ENCODE measurements at regions of chr1 and their contacts with region 1.

Region 1: GRCh38 chr1:13960375-13960987 is 260.5 kb downstream of the PRDM2 start:
- DNase-seq: peak; percentile 84
- H3K4me3 ChIP-seq: no peak overlapping the region
- H3K27ac ChIP-seq: no peak overlapping the region
- H3K4me1 ChIP-seq: no peaks in the 10 kb centered on the region
- H3K27me3 ChIP-seq: no peaks in the 10 kb centered on the region
- CTCF ChIP-seq: peak; percentile 91

Region 2: DNA sequence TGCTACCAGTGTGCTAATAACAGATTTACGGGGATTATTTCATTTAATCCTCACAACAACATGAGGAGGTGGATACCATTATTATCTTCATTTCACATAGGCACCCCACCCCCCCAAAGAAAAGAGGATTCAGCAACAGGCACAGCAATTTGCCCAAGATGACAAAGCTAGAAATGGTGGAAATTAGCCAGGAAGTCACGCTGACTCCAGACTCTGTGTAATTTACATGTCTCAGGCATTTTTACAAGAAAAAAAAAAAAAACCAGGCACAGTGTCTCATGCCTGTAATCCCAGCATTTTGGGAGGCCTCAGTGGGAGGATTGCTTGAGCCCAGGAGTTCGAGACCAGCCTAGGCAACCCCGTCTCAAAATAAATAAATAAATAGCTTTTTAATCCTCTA is 298.0 kb before region 1 on chr1:
- intact Hi-C with region 1: loop called (anchors 2 kb)
- DNase-seq: no peak
- H3K4me3 ChIP-seq: no peak overlapping the region
- H3K27ac ChIP-seq: no peak overlapping the region
- H3K4me1 ChIP-seq: no peaks in the 10 kb centered on the region
- H3K27me3 ChIP-seq: no peaks in the 10 kb centered on the region
- CTCF ChIP-seq: no peak

Region 3: GRCh38 chr1:13707164-13707563 is 253.3 kb before region 1 on chr1:
- intact Hi-C with region 1: no loop called
- DNase-seq: no peak
- H3K4me3 ChIP-seq: no peak overlapping the region
- H3K27ac ChIP-seq: no peak overlapping the region
- H3K4me1 ChIP-seq: peaks cover 4% of the 10 kb centered on the region
- H3K27me3 ChIP-seq: no peaks in the 10 kb centered on the region
- CTCF ChIP-seq: no peak

Region 4: GRCh38 chr1:13828454-13829151 is 131.9 kb before region 1 on chr1:
- intact Hi-C with region 1: loop called (anchors 2 kb)
- DNase-seq: peak; percentile 88
- H3K4me3 ChIP-seq: peak overlapping the region; percentile 5
- H3K27ac ChIP-seq: peak overlapping the region; percentile 33
- H3K4me1 ChIP-seq: peaks cover 4% of the 10 kb centered on the region
- H3K27me3 ChIP-seq: no peaks in the 10 kb centered on the region
- CTCF ChIP-seq: peak; percentile 82

Region 5: DNA sequence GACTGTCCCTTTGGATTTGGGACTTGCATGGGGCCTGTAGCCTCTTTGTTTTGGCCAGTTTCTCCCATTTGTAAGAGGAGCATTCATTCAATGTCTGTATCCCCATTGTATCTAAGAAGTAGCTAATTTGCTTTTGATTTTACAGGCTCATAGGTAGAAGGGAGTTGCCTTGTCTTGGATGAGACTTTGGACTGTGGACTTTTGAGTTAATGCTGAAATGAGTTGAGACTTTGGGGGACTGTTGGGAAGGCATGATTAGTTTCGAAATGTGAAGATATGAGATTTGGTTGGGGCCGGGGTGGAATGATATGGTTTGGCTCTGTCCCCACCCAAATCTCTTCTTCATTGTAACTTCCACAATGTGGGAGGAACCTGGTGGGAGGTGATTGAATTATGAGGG is 108.8 kb before region 1 on chr1:
- intact Hi-C with region 1: no loop called
- DNase-seq: no peak
- H3K4me3 ChIP-seq: no peak overlapping the region
- H3K27ac ChIP-seq: no peak overlapping the region
- H3K4me1 ChIP-seq: no peaks in the 10 kb centered on the region
- H3K27me3 ChIP-seq: no peaks in the 10 kb centered on the region
- CTCF ChIP-seq: no peak

Region 6: GRCh38 chr1:13864760-13865159 is 95.7 kb before region 1 on chr1:
- intact Hi-C with region 1: no loop called
- DNase-seq: no peak
- H3K4me3 ChIP-seq: no peak overlapping the region
- H3K27ac ChIP-seq: no peak overlapping the region
- H3K4me1 ChIP-seq: no peaks in the 10 kb centered on the region
- H3K27me3 ChIP-seq: no peaks in the 10 kb centered on the region
- CTCF ChIP-seq: no peak

Region 7: DNA sequence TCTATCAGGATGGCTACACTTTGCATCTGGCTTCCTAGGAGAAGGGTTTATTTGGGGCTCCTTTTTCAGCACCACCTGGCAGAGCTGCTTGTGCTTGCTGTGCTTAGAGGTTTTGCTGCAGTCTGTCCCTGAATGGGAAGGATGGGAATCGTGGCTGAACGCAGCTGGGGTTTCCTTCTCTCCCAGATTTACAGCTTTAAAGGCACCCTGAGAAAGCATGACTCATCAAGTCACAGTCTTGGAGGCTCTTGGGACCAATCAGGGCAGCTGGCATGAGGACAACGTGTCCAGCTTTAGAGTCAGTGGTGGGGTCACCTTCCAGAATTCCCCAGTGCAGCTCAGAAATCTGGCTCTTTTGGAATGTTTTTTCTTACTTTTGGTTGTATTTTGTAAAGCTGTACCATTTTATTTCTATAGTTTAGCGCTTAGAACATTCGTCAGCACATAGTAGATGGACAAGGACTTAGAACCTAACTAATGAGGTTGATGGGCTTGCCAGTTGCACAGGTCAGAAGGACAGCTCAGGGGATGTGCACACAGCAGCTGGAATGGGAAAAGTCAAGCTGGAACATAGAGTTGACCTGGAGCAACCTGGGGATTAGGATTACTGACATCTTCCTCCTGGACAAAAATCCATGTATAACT is 37.9 kb before region 1 on chr1:
- intact Hi-C with region 1: no loop called
- DNase-seq: no peak
- H3K4me3 ChIP-seq: no peak overlapping the region
- H3K27ac ChIP-seq: no peak overlapping the region
- H3K4me1 ChIP-seq: no peaks in the 10 kb centered on the region
- H3K27me3 ChIP-seq: no peaks in the 10 kb centered on the region
- CTCF ChIP-seq: no peak

Region 8: DNA sequence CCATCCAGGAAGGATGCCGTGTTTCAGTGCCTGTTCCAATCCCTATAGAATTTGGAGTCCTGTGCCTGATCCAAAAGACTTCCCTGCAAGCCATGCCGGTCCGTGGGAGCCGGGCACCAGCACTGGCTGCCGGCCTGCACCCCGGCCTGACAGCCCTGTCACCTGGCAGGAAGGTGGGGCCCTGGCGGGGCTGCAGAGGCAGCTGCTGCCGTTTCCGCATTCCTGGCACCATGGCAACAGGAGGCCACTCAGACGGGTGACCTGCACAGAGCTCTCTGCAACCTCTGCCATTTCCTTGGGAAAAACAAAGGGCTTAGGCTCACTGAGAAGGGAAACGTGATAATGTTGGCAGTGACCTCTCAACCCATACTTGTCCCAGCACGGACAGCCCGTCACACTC is 1129.9 kb after region 1 on chr1:
- intact Hi-C with region 1: loop called (anchors 10 kb)
- DNase-seq: peak; percentile 90
- H3K4me3 ChIP-seq: no peak overlapping the region
- H3K27ac ChIP-seq: no peak overlapping the region
- H3K4me1 ChIP-seq: peaks cover 7% of the 10 kb centered on the region
- H3K27me3 ChIP-seq: no peaks in the 10 kb centered on the region
- CTCF ChIP-seq: no peak

Measured in colonic mucosa (tissue), 4 donors.